Heart left ventricle (tissue), 16 donors: ENCODE measurements at regions of chr10 and their contacts with region 1.

Region 1: DNA sequence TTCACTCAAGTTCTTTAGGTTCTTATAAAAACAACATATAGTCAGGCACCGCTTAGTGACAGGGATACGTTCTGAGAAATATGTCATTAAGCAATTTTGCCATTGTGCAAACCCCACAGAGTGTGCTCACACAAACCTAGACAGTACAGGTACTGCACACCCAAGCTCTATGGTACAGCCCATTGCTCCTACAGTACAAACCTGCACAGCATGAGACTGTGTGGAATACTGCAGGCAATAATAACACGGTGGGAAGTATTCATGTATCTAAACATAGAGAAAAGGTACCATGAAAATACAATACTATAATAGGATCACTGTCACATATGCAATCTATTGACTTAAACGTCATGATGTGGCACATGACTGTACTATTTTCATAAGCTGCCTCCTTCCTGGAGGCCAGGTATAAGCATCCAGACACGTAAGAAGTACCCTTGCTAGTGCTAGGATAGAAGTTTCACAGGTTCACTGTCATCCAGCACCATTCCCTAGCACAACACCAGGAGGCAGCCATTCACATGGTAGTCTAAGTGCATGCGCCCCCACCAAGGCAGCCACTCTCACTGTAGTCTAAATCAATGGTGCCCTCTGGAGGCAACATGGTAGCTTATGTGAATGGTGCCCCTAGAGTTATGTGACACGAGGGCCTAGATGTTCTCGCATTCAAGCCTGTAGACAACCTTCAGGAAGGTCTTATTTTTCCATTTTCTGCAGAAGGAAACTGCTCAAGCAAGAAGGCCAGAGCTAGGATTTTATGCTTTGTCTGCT is 98.5 kb downstream of the ARHGAP22 start:
- DNase-seq: peak in 1 of 5 donors; percentile 11
- ATAC-seq: peak in 1 of 4 donors; percentile 40
- H3K4me3 ChIP-seq: no peak overlapping the region
- H3K27ac ChIP-seq: no peak overlapping the region
- H3K4me1 ChIP-seq: peaks cover 0 to 40% (median 19%) of the 10 kb centered on the region in 12 donors
- H3K27me3 ChIP-seq: no peaks in the 10 kb centered on the region
- CTCF ChIP-seq: peak in 6 of 12 donors; percentile 6 to 29 (median 18)
- POLR2A ChIP-seq: no peak

Region 2: GRCh38 chr10:48215488-48216204 is 290.7 kb before region 1 on chr10:
- intact Hi-C with region 1: loop called in 1 of 10 experiments (anchors 5 kb)
- DNase-seq: peak in 1 of 5 donors; percentile 20
- ATAC-seq: peak in 2 of 4 donors; percentile 36 to 64
- H3K4me3 ChIP-seq: no peak overlapping the region
- H3K27ac ChIP-seq: no peak overlapping the region
- H3K4me1 ChIP-seq: no peaks in the 10 kb centered on the region
- H3K27me3 ChIP-seq: peaks cover 0 to 13% (median 0%) of the 10 kb centered on the region in 9 donors
- CTCF ChIP-seq: peak; percentile 34 to 62 (median 55)
- POLR2A ChIP-seq: no peak

Region 3: DNA sequence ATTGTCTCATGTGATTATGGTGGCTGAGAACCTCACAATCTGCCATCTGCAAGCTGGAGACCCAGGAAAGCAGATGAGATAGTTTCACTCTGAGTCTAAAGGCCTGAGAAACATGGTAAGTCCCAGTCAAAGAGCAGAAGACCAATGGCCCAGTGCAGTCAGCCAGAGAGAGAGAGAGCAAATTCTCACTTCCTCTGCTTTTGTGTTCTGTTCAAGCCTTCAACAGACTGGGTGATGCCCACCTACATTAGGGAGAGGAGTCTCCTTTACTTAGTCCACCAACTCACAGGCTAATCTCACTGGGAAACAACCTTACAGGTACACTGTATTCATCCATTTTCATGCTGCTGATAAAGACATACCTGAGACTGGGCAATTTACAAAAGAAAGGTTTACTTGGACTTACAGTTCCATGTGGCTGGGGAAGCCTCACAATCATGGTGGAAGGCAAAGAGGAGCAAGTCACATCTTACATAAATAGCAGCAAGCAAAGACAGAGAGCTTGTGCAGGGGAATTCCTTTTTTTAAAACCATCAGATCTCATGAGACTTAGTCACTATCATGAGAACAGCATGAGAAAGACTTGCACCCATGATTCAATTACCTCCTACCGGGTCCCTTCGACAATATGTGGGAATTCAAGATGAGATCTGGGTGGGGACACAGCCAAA is 227.1 kb before region 1 on chr10:
- intact Hi-C with region 1: no loop called
- DNase-seq: no peak
- ATAC-seq: no peak
- H3K4me3 ChIP-seq: no peak overlapping the region
- H3K27ac ChIP-seq: no peak overlapping the region
- H3K4me1 ChIP-seq: no peaks in the 10 kb centered on the region
- H3K27me3 ChIP-seq: no peaks in the 10 kb centered on the region
- CTCF ChIP-seq: no peak
- POLR2A ChIP-seq: no peak

Region 4: DNA sequence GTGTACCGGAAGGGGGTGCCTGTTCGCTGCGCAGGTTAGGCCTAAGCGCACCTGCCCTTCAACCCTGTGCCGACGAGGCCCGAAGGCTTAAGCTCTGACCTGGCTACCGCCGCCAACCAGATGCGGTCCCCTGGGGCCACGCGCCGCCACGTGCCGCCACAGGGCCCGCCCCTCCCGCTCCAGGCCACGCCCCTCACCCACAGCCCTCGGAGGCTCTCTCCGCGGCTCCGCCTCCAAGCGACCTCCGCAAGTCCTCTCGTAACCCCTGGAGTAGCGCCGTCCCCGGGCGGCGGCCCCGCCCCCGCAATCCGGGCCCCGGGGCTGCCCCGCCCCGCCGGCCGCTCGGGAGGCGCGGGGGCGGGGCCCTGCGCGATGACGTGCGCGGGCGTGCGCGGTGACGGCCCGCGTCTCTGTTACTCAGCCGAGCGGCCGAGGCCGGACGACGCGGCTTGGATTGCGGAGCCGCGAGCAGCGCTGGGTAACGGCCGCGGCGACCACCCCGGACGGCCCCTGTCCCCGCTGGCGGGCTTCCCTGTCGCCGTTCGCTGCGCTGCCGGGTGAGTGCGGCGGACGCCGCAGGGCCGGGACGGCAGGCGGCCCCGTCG is 200.0 kb before region 1 on chr10 and contains the start of gene MAPK8:
- intact Hi-C with region 1: loop called in 1 of 10 experiments (anchors 5 kb)
- DNase-seq: peak; percentile 93 to 97 (median 95)
- ATAC-seq: peak; percentile 93 to 97 (median 96)
- H3K4me3 ChIP-seq: peak within 1 kb of the TSS; percentile 74 to 97 (median 88)
- H3K27ac ChIP-seq: peak within 1 kb of the TSS; percentile 85 to 99 (median 97)
- H3K4me1 ChIP-seq: peaks cover 0 to 37% (median 21%) of the 10 kb centered on the region in 12 donors
- H3K27me3 ChIP-seq: no peaks in the 10 kb centered on the region
- CTCF ChIP-seq: no peak
- POLR2A ChIP-seq: peak; percentile 97 to 98
- total RNA-seq, gene MAPK8: 22.8 to 36.8 (median 31.8) TPM

Region 5: DNA sequence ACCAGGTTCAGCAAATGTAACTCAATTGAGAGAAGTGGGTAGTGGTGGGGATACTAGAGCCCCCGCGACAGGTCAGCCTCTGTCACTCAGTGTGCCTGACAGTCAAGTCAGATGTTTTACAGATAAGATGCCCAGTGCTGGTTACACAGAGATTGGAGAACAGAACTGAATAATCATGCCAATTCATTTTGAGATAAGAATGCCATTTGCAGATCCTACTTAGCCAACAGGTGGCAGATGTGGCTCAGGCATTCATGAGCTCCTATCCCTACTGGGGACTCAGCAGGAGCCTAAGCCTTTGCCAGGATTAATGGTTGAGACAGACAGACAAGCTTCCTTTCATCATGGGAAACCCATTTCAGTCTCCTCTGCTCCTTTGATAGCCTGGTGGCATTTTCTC is 62.1 kb before region 1 on chr10:
- intact Hi-C with region 1: loop called in 1 of 10 experiments (anchors 5 kb)
- DNase-seq: peak in 1 of 5 donors; percentile 32
- ATAC-seq: peak in 1 of 4 donors; percentile 31
- H3K4me3 ChIP-seq: no peak overlapping the region
- H3K27ac ChIP-seq: no peak overlapping the region
- H3K4me1 ChIP-seq: no peaks in the 10 kb centered on the region
- H3K27me3 ChIP-seq: no peaks in the 10 kb centered on the region
- CTCF ChIP-seq: peak in 9 of 12 donors; percentile 7 to 39 (median 15)
- POLR2A ChIP-seq: no peak

Region 6: GRCh38 chr10:48484911-48485310 is 21.4 kb before region 1 on chr10:
- intact Hi-C with region 1: loop called in 1 of 10 experiments (anchors 1 kb)
- DNase-seq: no peak
- ATAC-seq: no peak
- H3K4me3 ChIP-seq: no peak overlapping the region
- H3K27ac ChIP-seq: no peak overlapping the region
- H3K4me1 ChIP-seq: peaks cover 0 to 5% (median 0%) of the 10 kb centered on the region in 12 donors
- H3K27me3 ChIP-seq: no peaks in the 10 kb centered on the region
- CTCF ChIP-seq: no peak
- POLR2A ChIP-seq: no peak